Activated CD4-positive, alpha-beta T cell treated with anti-CD3 and anti-CD28 coated beads for 36 hours (primary cell): ENCODE measurements at regions of chr4 and their contacts with region 1.

Region 1: GRCh38 chr4:107719922-107720722 is at the start of gene PAPSS1:
- DNase-seq: peak; percentile 97
- ATAC-seq: peak; percentile 93
- H3K4me3 Mint-ChIP-seq: peak within 1 kb of the TSS; percentile 94
- H3K27ac Mint-ChIP-seq: peak within 1 kb of the TSS; percentile 94
- H3K4me1 Mint-ChIP-seq: peaks cover 28% of the 10 kb centered on the region
- H3K27me3 Mint-ChIP-seq: no peaks in the 10 kb centered on the region
- total RNA-seq, gene PAPSS1: 31.0 to 37.6 TPM

Region 2: GRCh38 chr4:107419052-107419451 is 301.1 kb before region 1 on chr4:
- CTCF ChIA-PET with region 1: no interaction called
- POLR2A ChIA-PET with region 1: no interaction called
- intact Hi-C with region 1: loop called in 1 of 2 experiments (anchors 1 kb)
- DNase-seq: no peak
- ATAC-seq: no peak
- H3K4me3 Mint-ChIP-seq: no peak overlapping the region
- H3K27ac Mint-ChIP-seq: no peak overlapping the region
- H3K4me1 Mint-ChIP-seq: peaks cover 1% of the 10 kb centered on the region
- H3K27me3 Mint-ChIP-seq: peaks cover 7% of the 10 kb centered on the region

Region 3: GRCh38 chr4:107654694-107655093 is 65.4 kb before region 1 on chr4:
- CTCF ChIA-PET with region 1: no interaction called
- POLR2A ChIA-PET with region 1: no interaction called
- intact Hi-C with region 1: loop called in 1 of 2 experiments (anchors 2 kb)
- DNase-seq: no peak
- ATAC-seq: no peak
- H3K4me3 Mint-ChIP-seq: no peak overlapping the region
- H3K27ac Mint-ChIP-seq: no peak overlapping the region
- H3K4me1 Mint-ChIP-seq: no peaks in the 10 kb centered on the region
- H3K27me3 Mint-ChIP-seq: no peaks in the 10 kb centered on the region

Region 4: DNA sequence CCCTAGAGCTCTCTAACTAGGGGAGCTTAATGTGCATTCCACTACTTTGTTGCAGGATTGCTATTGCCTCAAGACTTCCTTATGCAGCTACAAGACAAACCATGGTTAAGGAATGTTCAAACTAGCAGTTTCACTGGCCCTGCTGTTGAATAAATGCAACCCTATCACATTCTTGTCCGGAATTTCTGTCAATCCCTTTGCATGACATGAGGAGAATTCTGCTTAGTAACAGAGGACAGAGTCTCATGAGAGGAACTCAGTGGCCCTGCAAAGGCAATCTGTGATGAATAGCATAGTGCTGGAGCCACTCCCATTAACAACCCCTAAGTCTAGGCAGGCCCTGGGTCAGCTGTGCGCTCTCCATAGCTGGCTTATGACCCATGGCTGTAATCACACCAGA is 73.9 kb after region 1 on chr4:
- CTCF ChIA-PET with region 1: no interaction called
- POLR2A ChIA-PET with region 1: no interaction called
- intact Hi-C with region 1: no loop called
- DNase-seq: no peak
- ATAC-seq: no peak
- H3K4me3 Mint-ChIP-seq: no peak overlapping the region
- H3K27ac Mint-ChIP-seq: no peak overlapping the region
- H3K4me1 Mint-ChIP-seq: no peaks in the 10 kb centered on the region
- H3K27me3 Mint-ChIP-seq: peaks cover 9% of the 10 kb centered on the region

Region 5: DNA sequence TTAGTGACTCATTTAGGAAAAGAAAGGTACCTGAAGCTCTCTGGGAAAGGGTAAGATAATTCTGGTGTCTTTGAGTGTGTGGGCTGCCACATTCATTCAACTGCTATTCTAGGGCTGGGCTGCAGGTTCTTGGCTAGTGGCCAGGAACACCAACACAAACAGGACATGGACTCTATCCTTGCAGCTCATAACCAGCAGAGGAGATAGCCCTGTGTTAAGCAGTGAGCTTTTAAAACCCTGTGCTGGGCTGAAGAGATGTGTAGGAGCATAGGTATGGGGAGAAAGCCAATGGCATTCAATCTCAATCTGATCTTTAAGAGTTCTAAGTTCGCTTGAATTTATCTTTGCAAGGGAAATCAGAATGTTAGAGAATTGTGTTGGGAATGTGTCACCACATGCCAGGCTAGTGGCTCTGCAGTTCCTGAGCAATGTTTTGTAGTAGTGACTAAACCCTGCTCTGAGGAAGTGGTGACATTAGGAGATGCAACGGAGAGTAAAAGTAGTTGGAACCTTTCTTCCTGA is 143.8 kb after region 1 on chr4:
- CTCF ChIA-PET with region 1: no interaction called
- POLR2A ChIA-PET with region 1: no interaction called
- intact Hi-C with region 1: loop called in 1 of 2 experiments (anchors 1 kb)
- DNase-seq: peak; percentile 69
- ATAC-seq: peak; percentile 73
- H3K4me3 Mint-ChIP-seq: no peak overlapping the region
- H3K27ac Mint-ChIP-seq: no peak overlapping the region
- H3K4me1 Mint-ChIP-seq: peaks cover 22% of the 10 kb centered on the region
- H3K27me3 Mint-ChIP-seq: peaks cover 4% of the 10 kb centered on the region

Region 6: GRCh38 chr4:107989537-107990386 is 269.6 kb after region 1 on chr4 and contains the start of gene HADH:
- CTCF ChIA-PET with region 1: no interaction called
- POLR2A ChIA-PET with region 1: interaction called, 6 read pairs
- intact Hi-C with region 1: loop called (anchors 1 to 2 kb)
- DNase-seq: peak; percentile 97
- ATAC-seq: peak; percentile 98
- H3K4me3 Mint-ChIP-seq: peak within 1 kb of the TSS; percentile 95
- H3K27ac Mint-ChIP-seq: peak within 1 kb of the TSS; percentile 96
- H3K4me1 Mint-ChIP-seq: peaks cover 54% of the 10 kb centered on the region
- H3K27me3 Mint-ChIP-seq: no peaks in the 10 kb centered on the region
- total RNA-seq, gene HADH: 58.4 to 60.8 TPM

Region 7: GRCh38 chr4:108620101-108620932 is 900.2 kb after region 1 on chr4 and contains the start of gene RPL34:
- CTCF ChIA-PET with region 1: no interaction called
- POLR2A ChIA-PET with region 1: no interaction called
- intact Hi-C with region 1: loop called (anchors 1 to 2 kb)
- DNase-seq: peak; percentile 98
- ATAC-seq: peak; percentile 91
- H3K4me3 Mint-ChIP-seq: peak within 1 kb of the TSS; percentile 90
- H3K27ac Mint-ChIP-seq: peak within 1 kb of the TSS; percentile 98
- H3K4me1 Mint-ChIP-seq: peaks cover 47% of the 10 kb centered on the region
- H3K27me3 Mint-ChIP-seq: no peaks in the 10 kb centered on the region
- total RNA-seq, gene RPL34: 1,121 to 1,847 TPM